ENCODE measurements at regions of chrX and their contacts with region 1.

Region 1: GRCh38 chrX:70433848-70434351 is 10.7 kb upstream of the DLG3 start:
- DNase-seq: peak; percentile 42
- H3K4me3 ChIP-seq: peak overlapping the region; percentile 60 to 70 (median 61)
- H3K27ac ChIP-seq: peak overlapping the region; percentile 54
- H3K4me1 ChIP-seq: peaks cover 16% of the 10 kb centered on the region
- H3K27me3 ChIP-seq: no peaks in the 10 kb centered on the region
- CTCF ChIP-seq: peak; percentile 42 to 68

Region 2: GRCh38 chrX:70133303-70134115 is 300.4 kb before region 1 on chrX and contains the start of gene IGBP1:
- CTCF ChIA-PET with region 1: no interaction called
- dilution Hi-C with region 1: no loop called
- in situ Hi-C with region 1: no loop called
- intact Hi-C with region 1: loop called (anchors 5 kb)
- DNase-seq: peak; percentile 79
- H3K4me3 ChIP-seq: peak within 1 kb of the TSS; percentile 59 to 82 (median 68)
- H3K27ac ChIP-seq: peak within 1 kb of the TSS; percentile 89
- H3K4me1 ChIP-seq: peaks cover 18% of the 10 kb centered on the region
- H3K27me3 ChIP-seq: no peaks in the 10 kb centered on the region
- CTCF ChIP-seq: peak; percentile 49 to 62
- total RNA-seq, gene IGBP1: 31.1 to 67.3 TPM

Region 3: DNA sequence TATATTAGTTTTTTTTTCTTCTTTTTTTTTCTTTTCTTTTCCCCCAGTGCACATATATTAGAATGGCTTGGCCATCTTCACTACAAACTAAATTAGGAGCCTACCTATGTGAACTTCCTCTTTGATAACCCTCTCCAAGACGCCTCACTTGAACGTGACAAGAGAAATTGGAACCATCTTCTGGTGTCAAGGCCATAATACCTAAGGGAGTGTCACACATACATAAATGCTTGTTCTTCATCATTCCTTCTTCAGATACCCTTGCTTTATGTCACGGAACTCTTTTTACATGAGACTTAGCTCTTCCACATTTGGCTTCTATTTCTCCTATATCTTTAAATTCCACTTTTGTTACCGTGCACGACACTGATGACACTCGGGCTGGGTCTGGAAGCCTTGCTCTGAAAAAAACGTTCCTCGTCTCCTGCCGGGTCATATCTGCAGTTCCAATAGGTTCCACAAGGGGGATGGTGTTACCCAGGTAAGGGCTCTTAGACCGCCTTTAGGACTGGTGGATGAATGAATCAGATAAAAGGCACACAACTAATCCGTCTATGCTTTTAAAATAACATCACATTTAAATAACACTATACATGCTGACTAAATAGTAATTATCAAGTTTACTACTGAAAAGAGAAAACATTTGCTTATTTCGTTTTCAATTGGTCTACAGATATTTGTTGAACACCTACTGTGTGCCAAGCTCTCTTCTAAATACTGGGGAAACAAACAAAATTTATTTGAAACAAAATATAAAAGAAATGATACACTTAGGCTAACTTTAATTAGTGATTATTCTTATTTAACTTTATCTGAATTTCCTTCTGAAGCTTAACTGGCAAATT is 236.7 kb before region 1 on chrX:
- CTCF ChIA-PET with region 1: no interaction called
- dilution Hi-C with region 1: no loop called
- in situ Hi-C with region 1: no loop called
- intact Hi-C with region 1: loop called (anchors 5 kb)
- DNase-seq: peak; percentile 55
- H3K4me3 ChIP-seq: no peak overlapping the region
- H3K27ac ChIP-seq: no peak overlapping the region
- H3K4me1 ChIP-seq: no peaks in the 10 kb centered on the region
- H3K27me3 ChIP-seq: no peaks in the 10 kb centered on the region
- CTCF ChIP-seq: peak; percentile 58 to 76

Region 4: GRCh38 chrX:70289793-70290776 is 143.8 kb before region 1 on chrX and contains the starts of genes KIF4A and PDZD11:
- CTCF ChIA-PET with region 1: interaction called, 8 read pairs
- dilution Hi-C with region 1: no loop called
- in situ Hi-C with region 1: no loop called
- intact Hi-C with region 1: loop called (anchors 2 kb)
- DNase-seq: peak; percentile 78
- H3K4me3 ChIP-seq: peak within 1 kb of the TSS; percentile 50 to 62 (median 54)
- H3K27ac ChIP-seq: peak within 1 kb of the TSS; percentile 53
- H3K4me1 ChIP-seq: peaks cover 2% of the 10 kb centered on the region
- H3K27me3 ChIP-seq: no peaks in the 10 kb centered on the region
- CTCF ChIP-seq: no peak
- total RNA-seq, gene KIF4A: 0.50 to 18.8 TPM
- total RNA-seq, gene PDZD11: 43.8 to 56.9 TPM

Region 5: DNA sequence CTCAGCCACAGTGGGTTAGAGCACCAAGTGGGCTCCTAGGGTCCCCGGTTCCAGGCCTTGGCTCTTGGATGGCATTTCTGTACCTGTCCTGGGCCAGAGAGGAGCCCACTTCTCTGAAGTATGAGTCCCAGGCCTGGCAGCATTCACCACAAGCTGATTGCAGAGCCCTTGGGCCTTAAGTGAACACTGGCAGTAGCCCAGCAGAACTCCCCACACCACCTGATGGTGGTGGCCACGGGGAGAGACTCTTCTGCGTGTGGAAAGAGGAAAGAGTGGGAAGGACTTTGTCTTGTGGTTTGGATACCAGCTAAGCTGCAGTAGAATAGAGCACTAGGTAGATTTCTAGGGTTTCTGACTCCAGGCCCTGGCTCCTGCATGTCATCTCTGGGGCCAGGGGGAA is 115.5 kb after region 1 on chrX:
- CTCF ChIA-PET with region 1: no interaction called
- dilution Hi-C with region 1: no loop called
- in situ Hi-C with region 1: no loop called
- intact Hi-C with region 1: no loop called
- DNase-seq: no peak
- H3K4me3 ChIP-seq: no peak overlapping the region
- H3K27ac ChIP-seq: no peak overlapping the region
- H3K4me1 ChIP-seq: no peaks in the 10 kb centered on the region
- H3K27me3 ChIP-seq: no peaks in the 10 kb centered on the region
- CTCF ChIP-seq: no peak

Measured in mammary epithelial cell (primary cell).